Naive thymus-derived CD4-positive, alpha-beta T cell (primary cell): ENCODE measurements at regions of chr1 and their contacts with region 1.

Region 1: GRCh38 chr1:198556971-198557370 is 16.5 kb upstream of the ATP6V1G3 start:
- DNase-seq: peak; percentile 12 to 90 (median 82)
- ATAC-seq: peak; percentile 95
- H3K4me3 ChIP-seq: peak overlapping the region; percentile 21
- H3K4me3 Mint-ChIP-seq: peak overlapping the region; percentile 63 to 89 (median 74)
- H3K27ac ChIP-seq: peak overlapping the region; percentile 59
- H3K27ac Mint-ChIP-seq: peak overlapping the region; percentile 51 to 95 (median 87)
- H3K4me1 ChIP-seq: peaks cover 65 to 71% of the 10 kb centered on the region in 2 donors
- H3K4me1 Mint-ChIP-seq: peaks cover 52 to 94% (median 89%) of the 10 kb centered on the region in 7 donors
- H3K27me3 ChIP-seq: no peaks in the 10 kb centered on the region
- H3K27me3 Mint-ChIP-seq: no peaks in the 10 kb centered on the region

Region 2: DNA sequence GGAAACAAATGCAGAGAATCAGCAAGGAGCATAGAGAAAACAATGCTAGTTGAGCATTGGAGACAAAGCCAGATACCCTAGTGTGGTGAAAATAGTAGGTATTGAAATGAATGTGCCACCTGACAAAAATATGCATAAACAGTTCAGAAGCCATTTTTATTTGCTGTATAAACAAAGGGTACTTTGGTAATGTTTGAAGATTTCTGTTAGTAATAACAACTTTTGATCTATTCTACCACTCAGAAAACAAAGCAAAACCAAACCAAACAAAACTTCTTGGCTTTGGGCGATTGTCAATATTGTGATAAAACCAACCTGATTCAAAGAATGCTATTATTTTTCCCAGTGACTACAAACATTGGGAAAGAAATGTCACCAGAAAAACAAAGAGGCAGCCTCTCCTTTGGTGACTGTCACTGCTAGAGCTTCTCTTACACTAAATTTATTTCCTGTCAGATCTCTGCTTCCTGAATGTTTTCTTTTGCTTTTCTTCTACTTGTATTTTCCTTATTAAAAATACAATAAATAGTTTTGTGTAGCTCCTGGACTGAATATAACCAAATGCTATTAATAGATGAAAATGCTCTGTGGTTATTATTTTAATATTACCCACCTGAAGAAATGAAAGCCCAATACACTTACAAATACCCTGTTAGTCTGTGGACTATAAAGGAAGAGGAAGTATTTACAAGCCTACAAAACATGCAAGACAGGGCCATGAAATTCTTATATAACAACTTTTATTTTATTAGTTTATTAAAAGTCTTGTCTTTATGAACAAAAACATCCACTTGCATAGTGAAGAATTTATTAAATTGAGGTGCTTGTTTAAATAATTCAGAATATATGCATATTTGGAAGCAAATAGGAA is 22.2 kb before region 1 on chr1:
- CTCF ChIA-PET with region 1: interaction called, 9 read pairs
- POLR2A ChIA-PET with region 1: interaction called, 12 read pairs
- intact Hi-C with region 1: loop called (anchors 1 to 2 kb)
- DNase-seq: peak in 1 of 9 donors; percentile 26
- ATAC-seq: peak; percentile 47
- H3K4me3 ChIP-seq: no peak overlapping the region
- H3K4me3 Mint-ChIP-seq: peak overlapping the region; percentile 29 to 83 (median 74)
- H3K27ac ChIP-seq: peak overlapping the region; percentile 65
- H3K27ac Mint-ChIP-seq: peak overlapping the region; percentile 55 to 91 (median 82)
- H3K4me1 ChIP-seq: peaks cover 22 to 48% of the 10 kb centered on the region in 2 donors
- H3K4me1 Mint-ChIP-seq: peaks cover 49 to 96% (median 90%) of the 10 kb centered on the region in 7 donors
- H3K27me3 ChIP-seq: no peaks in the 10 kb centered on the region
- H3K27me3 Mint-ChIP-seq: no peaks in the 10 kb centered on the region

Region 3: DNA sequence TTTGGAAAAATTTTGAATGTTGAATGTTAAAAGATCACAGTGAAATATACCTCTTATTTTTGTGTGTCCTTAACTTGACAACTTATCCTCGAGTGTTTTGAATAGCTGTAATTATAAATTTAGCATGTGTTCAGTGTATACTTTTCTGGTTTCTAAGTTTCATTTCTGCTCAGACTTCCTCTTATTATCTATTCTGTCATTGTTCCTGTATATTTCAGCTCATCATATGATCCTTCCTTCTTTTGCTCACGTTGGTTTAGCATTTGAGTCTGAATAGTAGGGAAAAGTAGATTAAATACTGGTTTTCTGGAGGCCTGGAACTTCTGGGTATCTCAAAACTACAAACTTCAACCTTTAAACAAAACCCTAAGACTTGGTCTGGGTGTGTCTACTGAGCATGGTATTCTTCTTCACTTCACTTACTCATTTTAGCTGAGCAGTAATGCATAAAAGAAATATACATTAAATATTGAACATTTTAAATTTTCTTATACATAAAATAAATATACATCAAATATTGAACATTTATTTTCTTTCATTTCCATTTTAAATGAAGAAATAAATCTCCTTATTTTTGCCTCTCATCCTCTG is 13.2 kb before region 1 on chr1:
- CTCF ChIA-PET with region 1: interaction called, 3 read pairs
- POLR2A ChIA-PET with region 1: interaction called, 12 read pairs
- intact Hi-C with region 1: loop called (anchors 1 to 2 kb)
- DNase-seq: no peak
- ATAC-seq: peak; percentile 49
- H3K4me3 ChIP-seq: no peak overlapping the region
- H3K4me3 Mint-ChIP-seq: peak overlapping the region in 8 of 10 donors; percentile 23 to 65 (median 50)
- H3K27ac ChIP-seq: peak overlapping the region; percentile 5
- H3K27ac Mint-ChIP-seq: peak overlapping the region in 8 of 9 donors; percentile 11 to 94 (median 41)
- H3K4me1 ChIP-seq: peaks cover 11 to 13% of the 10 kb centered on the region in 2 donors
- H3K4me1 Mint-ChIP-seq: peaks cover 30 to 72% (median 56%) of the 10 kb centered on the region in 7 donors
- H3K27me3 ChIP-seq: no peaks in the 10 kb centered on the region
- H3K27me3 Mint-ChIP-seq: no peaks in the 10 kb centered on the region

Region 4: GRCh38 chr1:198598796-198599321 is 41.9 kb after region 1 on chr1:
- CTCF ChIA-PET with region 1: no interaction called
- POLR2A ChIA-PET with region 1: interaction called, 8 read pairs
- intact Hi-C with region 1: loop called in 1 of 2 experiments (anchors 1 kb)
- DNase-seq: peak in 1 of 9 donors; percentile 22
- ATAC-seq: peak; percentile 57
- H3K4me3 ChIP-seq: peak overlapping the region; percentile 11
- H3K4me3 Mint-ChIP-seq: peak overlapping the region in 9 of 10 donors; percentile 18 to 84 (median 61)
- H3K27ac ChIP-seq: peak overlapping the region; percentile 55
- H3K27ac Mint-ChIP-seq: peak overlapping the region; percentile 58 to 96 (median 93)
- H3K4me1 ChIP-seq: peaks cover 34 to 65% of the 10 kb centered on the region in 2 donors
- H3K4me1 Mint-ChIP-seq: peaks cover 49 to 95% (median 91%) of the 10 kb centered on the region in 7 donors
- H3K27me3 ChIP-seq: no peaks in the 10 kb centered on the region
- H3K27me3 Mint-ChIP-seq: no peaks in the 10 kb centered on the region

Region 5: GRCh38 chr1:198612471-198613260 is 55.7 kb after region 1 on chr1:
- CTCF ChIA-PET with region 1: interaction called, 5 read pairs
- POLR2A ChIA-PET with region 1: interaction called, 6 read pairs
- intact Hi-C with region 1: loop called (anchors 1 kb)
- DNase-seq: peak in 6 of 9 donors; percentile 30 to 52 (median 41)
- ATAC-seq: peak; percentile 62
- H3K4me3 ChIP-seq: peak overlapping the region; percentile 44
- H3K4me3 Mint-ChIP-seq: peak overlapping the region; percentile 66 to 97 (median 82)
- H3K27ac ChIP-seq: peak overlapping the region; percentile 82
- H3K27ac Mint-ChIP-seq: peak overlapping the region; percentile 95 to 100 (median 98)
- H3K4me1 ChIP-seq: peaks cover 56 to 71% of the 10 kb centered on the region in 2 donors
- H3K4me1 Mint-ChIP-seq: peaks cover 52 to 92% (median 73%) of the 10 kb centered on the region in 7 donors
- H3K27me3 ChIP-seq: no peaks in the 10 kb centered on the region
- H3K27me3 Mint-ChIP-seq: no peaks in the 10 kb centered on the region